HEK293 (cell line): ENCODE measurements at regions of chr2 and their contacts with region 1.

Region 1: GRCh38 chr2:198116756-198117155 is 312.4 kb downstream of the PLCL1 start:
- H3K4me3 ChIP-seq: no peak overlapping the region
- H3K27ac ChIP-seq: no peak overlapping the region
- H3K4me1 ChIP-seq: no peaks in the 10 kb centered on the region
- CTCF ChIP-seq: no peak

Region 2: DNA sequence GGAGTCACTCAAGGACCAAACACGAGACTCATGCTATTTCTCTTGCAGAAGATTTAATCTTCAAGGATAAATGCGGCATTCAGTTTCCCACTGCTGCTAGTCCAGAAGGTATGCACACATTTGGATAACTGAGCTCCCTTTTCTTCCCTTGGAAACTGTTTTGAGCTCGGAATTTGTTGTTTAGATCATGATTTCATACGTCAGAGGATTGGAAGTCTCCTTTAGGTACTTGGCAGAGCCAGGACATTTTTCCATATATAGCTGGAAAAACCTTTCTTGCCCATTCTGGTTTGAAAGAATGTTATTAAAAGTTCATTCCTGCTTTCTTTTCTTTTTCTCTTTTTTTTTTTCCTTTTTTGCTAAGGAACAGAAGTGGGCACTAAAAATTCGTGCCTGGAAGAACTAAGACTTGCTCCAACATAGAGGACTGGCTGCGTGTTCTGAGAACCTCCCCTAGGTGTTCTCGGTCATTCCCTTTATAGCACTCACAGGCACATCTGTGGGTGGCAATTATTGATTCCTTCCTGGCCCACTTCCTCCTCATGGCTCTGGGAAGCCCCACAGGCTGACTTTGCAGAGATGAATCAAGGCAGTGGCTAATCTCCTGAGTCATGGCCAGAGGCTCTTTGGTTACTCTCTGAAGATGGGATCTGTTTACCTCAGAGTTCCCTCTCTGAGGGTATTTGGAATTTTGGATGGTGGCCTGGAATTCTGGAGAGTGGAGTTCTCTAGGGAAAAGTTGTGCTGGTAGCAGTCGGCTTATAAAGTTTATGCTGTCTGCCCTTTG is 207.6 kb before region 1 on chr2:
- CTCF ChIA-PET with region 1: no interaction called
- POLR2A ChIA-PET with region 1: no interaction called
- H3K4me3 ChIP-seq: no peak overlapping the region
- H3K27ac ChIP-seq: no peak overlapping the region
- H3K4me1 ChIP-seq: no peaks in the 10 kb centered on the region
- CTCF ChIP-seq: no peak

Region 3: GRCh38 chr2:198127627-198128026 is 10.9 kb after region 1 on chr2:
- CTCF ChIA-PET with region 1: interaction called, 14 read pairs
- POLR2A ChIA-PET with region 1: no interaction called
- H3K4me3 ChIP-seq: no peak overlapping the region
- H3K27ac ChIP-seq: no peak overlapping the region
- H3K4me1 ChIP-seq: no peaks in the 10 kb centered on the region
- CTCF ChIP-seq: no peak